Activated T-helper 1 cell treated with anti-CD3 and anti-CD28 coated beads, Interleukin-12 subunit alpha, Interleukin-12 subunit beta, Interleukin-2, Interleukin-4 antibody, amounts not matched to agents 30 ng/mL and 10 ng/mL and 1 ng/mL, durations not matched to agents 14 hours and 24 hours and 36 hours (primary cell): ENCODE measurements at regions of chr3 and their contacts with region 1.

Region 1: DNA sequence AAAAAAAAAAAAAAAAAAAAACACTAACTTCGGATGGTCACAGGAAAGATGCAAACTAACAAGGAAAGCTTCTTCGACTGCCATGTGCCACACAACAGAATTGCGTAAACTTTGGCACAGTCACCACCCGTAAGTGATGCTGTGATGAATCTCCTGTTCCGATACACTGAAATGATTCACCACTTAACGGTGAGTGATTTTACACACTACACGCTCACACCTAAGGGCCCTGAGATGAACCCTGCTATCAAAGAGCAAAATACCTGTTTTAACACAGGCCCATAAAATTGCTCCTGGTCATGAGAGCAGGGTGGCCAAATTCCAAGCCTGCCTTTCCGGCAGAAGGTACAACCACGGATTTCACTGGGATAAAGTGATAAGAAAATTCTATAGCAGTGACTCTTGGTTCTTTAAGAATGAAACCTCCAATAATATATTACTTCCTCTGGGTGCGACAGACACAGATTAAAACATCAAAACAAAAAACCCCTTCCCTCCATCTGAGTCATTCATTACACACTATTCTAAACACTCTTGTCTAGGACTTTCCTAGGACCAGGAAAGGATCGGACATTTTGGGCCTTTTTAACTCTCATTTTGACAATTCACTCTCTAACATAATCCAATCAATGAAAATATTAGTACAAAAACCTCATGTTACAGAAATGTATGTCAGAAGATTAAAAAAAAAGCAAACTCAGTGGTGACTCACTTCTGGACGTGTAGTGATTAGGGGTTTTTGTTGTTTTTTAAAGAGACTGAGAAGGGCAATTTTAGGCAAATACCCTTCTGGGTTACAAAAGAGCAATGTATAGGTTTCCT is 28.3 kb downstream of the LRIG1 start:
- DNase-seq: peak; percentile 48
- H3K4me3 Mint-ChIP-seq: peak overlapping the region; percentile 76
- H3K27ac Mint-ChIP-seq: no peak overlapping the region
- H3K4me1 Mint-ChIP-seq: peaks cover 44% of the 10 kb centered on the region
- H3K27me3 Mint-ChIP-seq: no peaks in the 10 kb centered on the region

Region 2: GRCh38 chr3:66220602-66221377 is 251.7 kb before region 1 on chr3 and contains the start of gene SLC25A26:
- intact Hi-C with region 1: loop called (anchors 1 kb)
- DNase-seq: peak; percentile 97
- H3K4me3 Mint-ChIP-seq: peak within 1 kb of the TSS; percentile 98
- H3K27ac Mint-ChIP-seq: peak within 1 kb of the TSS; percentile 85
- H3K4me1 Mint-ChIP-seq: peaks cover 41% of the 10 kb centered on the region
- H3K27me3 Mint-ChIP-seq: peaks cover 2% of the 10 kb centered on the region
- total RNA-seq, gene SLC25A26: 17.0 and 18.8 TPM in 2 replicates

Region 3: DNA sequence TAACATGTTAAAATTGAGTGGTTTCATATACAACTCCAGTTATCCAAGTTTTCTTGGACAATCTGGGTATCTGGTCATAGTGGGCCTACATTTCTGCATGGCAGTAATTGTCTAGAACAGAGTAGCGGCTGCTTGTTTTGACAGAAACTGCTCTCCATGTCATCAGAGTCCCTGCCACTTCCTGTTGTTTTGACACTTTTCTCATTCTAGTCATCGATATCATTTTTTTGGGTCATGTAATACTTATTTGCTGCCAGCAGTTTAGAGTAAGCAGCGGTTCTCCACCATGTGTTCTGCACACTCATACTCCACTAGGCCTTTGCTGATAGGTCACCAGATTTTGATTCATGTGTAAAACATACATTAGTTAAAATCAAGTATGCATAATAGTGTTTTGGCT is 170.2 kb before region 1 on chr3:
- intact Hi-C with region 1: loop called (anchors 1 kb)
- DNase-seq: peak; percentile 37
- H3K4me3 Mint-ChIP-seq: peak overlapping the region; percentile 32
- H3K27ac Mint-ChIP-seq: peak overlapping the region; percentile 91
- H3K4me1 Mint-ChIP-seq: peaks cover 65% of the 10 kb centered on the region
- H3K27me3 Mint-ChIP-seq: no peaks in the 10 kb centered on the region

Region 4: DNA sequence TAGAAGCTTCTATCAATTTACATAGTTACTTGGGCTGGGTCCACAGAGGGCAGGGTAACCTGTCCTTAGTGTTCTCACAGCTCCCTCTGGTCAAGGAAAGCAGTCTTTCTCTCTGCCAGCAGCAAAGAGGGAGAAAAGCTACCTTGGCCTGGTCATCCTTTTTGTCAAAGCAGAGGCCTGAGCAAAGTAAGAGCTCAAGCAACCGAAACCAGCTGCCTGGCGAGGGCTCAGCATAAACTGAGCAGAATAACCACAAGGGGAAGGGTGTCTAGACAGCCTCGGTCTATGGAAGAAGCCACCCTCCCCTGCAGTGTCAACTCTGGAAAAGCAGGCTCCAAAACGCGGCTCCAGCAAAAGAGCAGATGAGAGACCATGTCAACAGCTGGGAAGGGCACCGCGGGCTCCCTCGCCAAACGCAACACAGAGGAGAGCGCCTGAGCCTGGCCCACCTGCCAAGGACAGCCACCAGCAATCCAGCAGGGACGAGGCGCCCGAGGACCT is 10.9 kb after region 1 on chr3:
- intact Hi-C with region 1: loop called (anchors 1 kb)
- DNase-seq: no peak
- H3K4me3 Mint-ChIP-seq: peak overlapping the region; percentile 42
- H3K27ac Mint-ChIP-seq: peak overlapping the region; percentile 35
- H3K4me1 Mint-ChIP-seq: peaks cover 52% of the 10 kb centered on the region
- H3K27me3 Mint-ChIP-seq: no peaks in the 10 kb centered on the region

Region 5: DNA sequence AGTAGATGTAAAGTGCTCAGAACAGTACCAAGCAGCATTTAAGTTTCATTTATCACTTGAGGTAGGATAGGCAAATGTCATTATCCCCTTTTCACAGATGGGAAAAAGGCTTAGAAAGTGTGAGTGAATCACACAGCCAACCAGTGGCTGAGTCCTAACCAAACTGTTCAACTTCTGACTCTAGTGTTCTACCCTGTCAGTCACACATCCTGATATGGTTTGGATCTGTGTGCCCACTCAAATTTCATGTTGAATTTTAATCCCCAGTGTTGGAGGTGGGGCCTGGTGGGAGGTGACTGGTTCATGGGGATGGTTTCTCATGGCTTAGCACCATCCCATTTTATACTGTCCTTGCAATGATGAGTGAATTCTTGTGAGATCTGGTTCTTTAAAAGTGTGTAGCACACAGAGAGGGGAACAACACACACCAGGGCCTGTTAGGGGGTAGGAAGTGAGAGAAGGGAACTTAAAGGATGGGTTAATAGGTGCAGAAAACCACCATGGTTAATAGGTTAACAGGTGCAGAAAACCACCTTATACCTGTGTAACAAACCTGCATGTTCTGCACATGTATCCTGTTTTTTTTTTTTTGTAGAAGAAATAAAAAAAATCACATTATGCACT is 877.1 kb after region 1 on chr3:
- intact Hi-C with region 1: loop called (anchors 5 kb)
- DNase-seq: no peak
- H3K4me3 Mint-ChIP-seq: no peak overlapping the region
- H3K27ac Mint-ChIP-seq: peak overlapping the region; percentile 3
- H3K4me1 Mint-ChIP-seq: peaks cover 14% of the 10 kb centered on the region
- H3K27me3 Mint-ChIP-seq: peaks cover 3% of the 10 kb centered on the region